ENCODE measurements at regions of chr6 and their contacts with region 1.

Region 1: GRCh38 chr6:85482905-85483700 is 33.2 kb downstream of the NT5E start:
- DNase-seq: peak; percentile 85
- ATAC-seq: peak; percentile 85
- H3K4me3 ChIP-seq: no peak overlapping the region
- H3K27ac ChIP-seq: 0 out of 2 replicates have a peak overlapping the region, but pooled peaks have one; percentile 11
- H3K4me1 ChIP-seq: 0 out of 2 replicates have a peak, but pooled peaks cover 5% of the 10 kb centered on the region
- H3K27me3 ChIP-seq: no peaks in the 10 kb centered on the region
- CTCF ChIP-seq: peak; percentile 96

Region 2: GRCh38 chr6:85354761-85355618 is 128.1 kb before region 1 on chr6:
- CTCF ChIA-PET with region 1: interaction called, 9 read pairs
- POLR2A ChIA-PET with region 1: no interaction called
- intact Hi-C with region 1: loop called (anchors 1 kb)
- DNase-seq: peak; percentile 76
- ATAC-seq: peak; percentile 88
- H3K4me3 ChIP-seq: no peak overlapping the region
- H3K27ac ChIP-seq: no peak overlapping the region
- H3K4me1 ChIP-seq: peaks cover 24% of the 10 kb centered on the region
- H3K27me3 ChIP-seq: no peaks in the 10 kb centered on the region
- CTCF ChIP-seq: peak; percentile 82

Region 3: GRCh38 chr6:85544776-85545175 is 61.7 kb after region 1 on chr6:
- CTCF ChIA-PET with region 1: no interaction called
- POLR2A ChIA-PET with region 1: no interaction called
- intact Hi-C with region 1: no loop called
- DNase-seq: no peak
- ATAC-seq: no peak
- H3K4me3 ChIP-seq: no peak overlapping the region
- H3K27ac ChIP-seq: no peak overlapping the region
- H3K4me1 ChIP-seq: no peaks in the 10 kb centered on the region
- H3K27me3 ChIP-seq: no peaks in the 10 kb centered on the region
- CTCF ChIP-seq: no peak

Region 4: GRCh38 chr6:85690071-85690470 is 207.0 kb after region 1 on chr6:
- CTCF ChIA-PET with region 1: interaction called, 13 read pairs
- POLR2A ChIA-PET with region 1: no interaction called
- intact Hi-C with region 1: no loop called
- DNase-seq: no peak
- ATAC-seq: no peak
- H3K4me3 ChIP-seq: no peak overlapping the region
- H3K27ac ChIP-seq: no peak overlapping the region
- H3K4me1 ChIP-seq: no peaks in the 10 kb centered on the region
- H3K27me3 ChIP-seq: no peaks in the 10 kb centered on the region
- CTCF ChIP-seq: no peak

Measured in PC-3 (cell line).